Heart right ventricle (tissue), 16 donors: ENCODE measurements at regions of chr7 and their contacts with region 1.

Region 1: GRCh38 chr7:102814025-102814471 is 65.2 kb downstream of the FAM185A start:
- DNase-seq: no peak
- ATAC-seq: no peak
- H3K4me3 ChIP-seq: no peak overlapping the region
- H3K27ac ChIP-seq: no peak overlapping the region
- H3K4me1 ChIP-seq: peaks cover 0 to 25% (median 19%) of the 10 kb centered on the region in 9 donors
- H3K27me3 ChIP-seq: no peaks in the 10 kb centered on the region
- CTCF ChIP-seq: no peak

Region 2: DNA sequence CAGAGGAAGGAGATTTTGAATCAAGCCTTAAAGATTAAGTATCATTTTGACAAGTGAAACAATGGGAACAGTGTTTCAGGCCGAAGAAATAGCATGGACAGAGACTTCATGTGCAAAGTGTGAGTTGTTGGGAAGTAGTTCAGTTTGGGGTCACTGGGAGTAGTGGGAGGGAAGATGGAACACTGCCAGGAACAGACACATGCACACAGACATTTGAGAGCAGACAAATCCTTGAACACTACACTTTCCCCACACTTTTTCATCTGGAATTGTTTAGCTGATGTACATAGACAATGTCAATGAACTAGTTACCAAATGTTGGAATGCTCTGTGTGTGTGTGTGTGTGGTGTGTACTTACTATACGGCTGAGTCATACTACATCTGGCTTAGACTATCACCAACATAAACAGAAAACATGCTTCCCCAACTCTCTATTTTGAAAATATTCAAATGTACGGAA is 46.3 kb after region 1 on chr7:
- intact Hi-C with region 1: loop called in 1 of 10 experiments (anchors 5 kb)
- DNase-seq: no peak
- ATAC-seq: no peak
- H3K4me3 ChIP-seq: no peak overlapping the region
- H3K27ac ChIP-seq: no peak overlapping the region
- H3K4me1 ChIP-seq: peaks cover 0 to 20% (median 0%) of the 10 kb centered on the region in 9 donors
- H3K27me3 ChIP-seq: no peaks in the 10 kb centered on the region
- CTCF ChIP-seq: no peak

Region 3: DNA sequence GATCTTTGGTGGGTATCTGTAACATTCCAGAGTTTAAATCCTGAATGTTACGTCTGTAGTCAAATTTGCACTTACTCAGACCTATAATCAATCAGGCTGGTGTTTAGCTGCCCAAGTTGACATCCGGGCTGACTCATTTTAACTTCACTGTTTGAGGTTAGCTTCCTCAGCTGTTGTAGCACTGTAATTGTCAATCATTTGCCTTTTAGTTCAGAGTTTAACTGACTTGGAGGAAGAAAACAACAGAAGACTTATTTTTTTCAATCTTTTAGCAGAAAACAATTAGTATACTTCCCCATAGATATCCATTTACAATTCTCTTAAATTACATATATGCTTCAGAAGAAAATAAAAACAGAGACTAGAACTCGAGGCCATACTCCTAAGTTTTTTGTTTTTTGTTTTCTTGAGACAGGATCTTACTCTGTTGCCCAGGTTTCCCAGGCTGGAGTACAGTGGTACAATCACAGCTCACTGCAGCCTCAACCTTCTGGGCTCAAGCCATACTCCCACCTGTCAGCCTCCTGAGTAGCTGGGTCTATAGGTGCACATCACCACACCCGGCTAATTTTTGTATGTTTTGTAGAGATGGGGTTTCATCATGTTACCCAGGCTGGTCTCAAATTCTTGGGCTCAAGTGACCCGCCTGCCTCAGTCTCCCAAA is 60.2 kb after region 1 on chr7:
- intact Hi-C with region 1: no loop called
- DNase-seq: no peak
- ATAC-seq: no peak
- H3K4me3 ChIP-seq: no peak overlapping the region
- H3K27ac ChIP-seq: no peak overlapping the region
- H3K4me1 ChIP-seq: peaks cover 0 to 14% (median 0%) of the 10 kb centered on the region in 9 donors
- H3K27me3 ChIP-seq: no peaks in the 10 kb centered on the region
- CTCF ChIP-seq: no peak